HepG2 (cell line): ENCODE measurements at regions of chr17 and their contacts with region 1.

Region 1: DNA sequence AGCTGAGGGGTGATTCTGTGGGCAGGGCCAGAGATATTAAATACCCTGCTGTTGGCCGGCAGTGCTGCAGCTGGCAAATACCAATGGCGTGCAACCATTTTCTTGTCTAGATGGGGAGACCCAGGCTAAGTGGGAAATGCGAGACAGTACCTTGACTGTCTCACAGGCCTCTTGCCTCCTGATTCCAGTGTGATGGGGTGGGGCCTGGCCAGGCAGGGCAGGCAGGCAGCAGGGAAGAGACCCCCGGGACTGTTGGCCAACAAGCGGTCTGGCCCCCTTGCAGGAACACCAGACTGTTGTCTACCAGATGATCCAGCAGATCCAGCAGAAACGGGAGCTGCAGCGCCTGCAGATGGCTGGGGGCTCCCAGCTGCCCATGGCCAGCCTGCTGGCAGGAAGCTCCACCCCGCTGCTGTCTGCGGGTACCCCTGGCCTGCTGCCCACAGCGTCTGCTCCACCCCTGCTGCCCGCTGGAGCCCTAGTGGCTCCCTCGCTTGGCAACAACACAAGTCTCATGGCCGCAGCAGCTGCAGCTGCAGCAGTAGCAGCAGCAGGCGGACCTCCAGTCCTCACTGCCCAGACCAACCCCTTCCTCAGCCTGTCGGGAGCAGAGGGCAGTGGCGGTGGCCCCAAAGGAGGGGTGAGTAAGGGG is 5.7 kb upstream of the CISD3 start:
- DNase-seq: no peak
- ATAC-seq: no peak
- H3K4me3 ChIP-seq: no peak overlapping the region
- H3K27ac ChIP-seq: no peak overlapping the region
- H3K4me1 ChIP-seq: peaks cover 26% of the 10 kb centered on the region
- H3K27me3 ChIP-seq: no peaks in the 10 kb centered on the region
- CTCF ChIP-seq: no peak
- EP300 ChIP-seq: no peak
- POLR2A ChIP-seq: no peak
- RAD21 ChIP-seq: no peak

Region 2: DNA sequence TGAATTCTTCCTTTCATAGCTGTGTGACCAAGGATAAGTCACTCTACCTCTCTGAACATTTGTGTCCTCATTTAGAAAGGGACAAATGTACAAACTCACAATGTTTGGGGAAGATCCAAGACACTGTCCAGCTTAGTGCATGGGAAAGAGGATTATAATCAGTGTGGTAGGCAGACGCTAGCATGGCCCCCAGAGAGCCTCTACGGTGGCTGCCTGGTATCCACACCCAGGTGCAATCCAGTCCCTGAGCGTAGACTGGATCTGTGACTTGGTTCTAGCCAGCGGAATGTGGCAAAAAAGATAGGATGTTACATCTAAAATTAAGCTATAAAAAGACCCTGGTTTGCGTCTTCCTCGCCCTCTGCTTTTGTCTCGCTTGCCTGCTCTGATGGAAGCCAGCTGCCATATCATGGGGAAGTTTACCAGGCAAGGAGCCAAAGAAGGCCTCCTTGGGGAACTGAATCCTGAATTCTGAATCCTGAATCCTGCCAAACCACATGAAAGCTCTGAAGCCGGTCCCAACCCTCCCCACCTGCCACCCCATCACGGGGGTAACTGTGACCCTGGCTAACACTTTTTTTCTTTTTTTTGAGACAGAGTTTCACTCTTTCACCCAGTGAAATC is 375.3 kb after region 1 on chr17:
- CTCF ChIA-PET with region 1: no interaction called
- POLR2A ChIA-PET with region 1: no interaction called
- in situ Hi-C with region 1: no loop called
- intact Hi-C with region 1: loop called (anchors 5 kb)
- DNase-seq: no peak
- ATAC-seq: no peak
- H3K4me3 ChIP-seq: no peak overlapping the region
- H3K27ac ChIP-seq: no peak overlapping the region
- H3K4me1 ChIP-seq: peaks cover 18% of the 10 kb centered on the region
- H3K27me3 ChIP-seq: peaks cover 6 to 58% of the 10 kb centered on the region in 2 experiments; a peak in 4 of 5 replicates
- CTCF ChIP-seq: no peak
- EP300 ChIP-seq: no peak
- POLR2A ChIP-seq: no peak
- RAD21 ChIP-seq: no peak